Panc1 (cell line): ENCODE measurements at regions of chr2 and their contacts with region 1.

Region 1: DNA sequence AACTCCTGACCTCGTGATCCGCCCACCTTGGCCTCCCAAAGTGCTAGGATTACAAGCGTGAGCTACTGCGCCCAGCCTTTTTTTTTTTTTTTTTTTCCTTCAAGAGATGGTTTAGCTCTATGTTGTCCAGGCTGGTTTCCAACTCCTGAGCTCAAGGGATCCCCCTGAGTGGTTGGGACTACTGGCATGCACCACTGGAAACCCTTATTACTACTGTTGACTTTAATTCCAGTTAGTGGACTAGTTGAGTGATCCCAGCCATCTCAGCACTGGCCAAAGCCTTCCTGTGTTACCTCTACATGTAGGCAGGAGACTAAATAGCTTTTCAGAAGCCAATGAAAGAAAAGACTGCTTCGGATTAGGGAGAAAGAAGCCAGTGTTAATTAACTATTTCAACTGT is 8.1 kb upstream of the SSB start:
- DNase-seq: no peak
- ATAC-seq: no peak
- H3K4me3 ChIP-seq: no peak overlapping the region
- H3K27ac ChIP-seq: no peak overlapping the region
- H3K4me1 ChIP-seq: no peaks in the 10 kb centered on the region; the same call in 1 of the 2 replicates
- H3K27me3 ChIP-seq: 0 out of 2 replicates have a peak, but pooled peaks cover 3% of the 10 kb centered on the region
- CTCF ChIP-seq: no peak

Region 2: DNA sequence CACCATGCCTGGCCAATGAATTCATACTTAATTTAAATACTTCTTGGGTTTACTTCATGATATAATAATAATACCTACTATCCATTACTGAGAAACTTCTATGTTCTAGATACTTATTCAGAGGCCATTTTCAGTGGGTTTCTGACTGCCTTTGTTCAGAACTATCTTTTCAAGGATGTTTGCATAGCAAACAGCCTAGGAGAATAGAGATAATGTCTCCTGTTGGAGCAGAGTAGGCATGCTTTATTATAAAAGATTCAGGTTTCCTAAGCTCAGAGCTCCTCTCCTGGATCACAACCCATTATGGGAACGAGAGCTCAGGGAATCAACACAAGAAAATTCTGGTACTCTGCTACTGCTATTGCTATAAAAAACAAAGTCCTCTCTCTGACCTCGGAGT is 228.1 kb before region 1 on chr2:
- CTCF ChIA-PET with region 1: no interaction called
- POLR2A ChIA-PET with region 1: no interaction called
- in situ Hi-C with region 1: no loop called
- intact Hi-C with region 1: no loop called
- DNase-seq: no peak
- ATAC-seq: no peak
- H3K4me3 ChIP-seq: no peak overlapping the region
- H3K27ac ChIP-seq: no peak overlapping the region
- H3K4me1 ChIP-seq: no peaks in the 10 kb centered on the region
- H3K27me3 ChIP-seq: no peaks in the 10 kb centered on the region
- CTCF ChIP-seq: no peak

Region 3: GRCh38 chr2:169670215-169670651 is 120.3 kb before region 1 on chr2:
- CTCF ChIA-PET with region 1: interaction called, 10 read pairs
- POLR2A ChIA-PET with region 1: no interaction called
- in situ Hi-C with region 1: no loop called
- intact Hi-C with region 1: no loop called
- DNase-seq: no peak
- ATAC-seq: no peak
- H3K4me3 ChIP-seq: no peak overlapping the region
- H3K27ac ChIP-seq: no peak overlapping the region
- H3K4me1 ChIP-seq: no peaks in the 10 kb centered on the region
- H3K27me3 ChIP-seq: no peaks in the 10 kb centered on the region
- CTCF ChIP-seq: no peak